ENCODE measurements at regions of chr21 and their contacts with region 1.

Region 1: GRCh38 chr21:34888569-34889319 is 160.4 kb downstream of the RUNX1 start:
- DNase-seq: peak; percentile 86 to 96
- H3K4me3 ChIP-seq: peak overlapping the region; percentile 77 to 85
- H3K27ac ChIP-seq: peak overlapping the region; percentile 86 to 94
- H3K4me1 ChIP-seq: peaks cover 4 to 24% of the 10 kb centered on the region in 2 donors
- H3K27me3 ChIP-seq: peaks cover 4% of the 10 kb centered on the region
- CTCF ChIP-seq: peak in 1 of 3 experiments; percentile 3

Region 2: GRCh38 chr21:34807146-34807880 is 81.4 kb before region 1 on chr21:
- intact Hi-C with region 1: loop called (anchors 5 kb)
- DNase-seq: peak in 1 of 2 donors; percentile 73
- H3K4me3 ChIP-seq: no peak overlapping the region
- H3K27ac ChIP-seq: peak overlapping the region; percentile 74 to 86
- H3K4me1 ChIP-seq: peaks cover 0 to 2% of the 10 kb centered on the region in 2 donors
- H3K27me3 ChIP-seq: no peaks in the 10 kb centered on the region
- CTCF ChIP-seq: no peak

Region 3: GRCh38 chr21:35256467-35256988 is 367.8 kb after region 1 on chr21:
- intact Hi-C with region 1: loop called (anchors 5 kb)
- DNase-seq: peak; percentile 33 to 89
- H3K4me3 ChIP-seq: peak overlapping the region; percentile 25 to 42
- H3K27ac ChIP-seq: peak overlapping the region in 1 of 2 donors; percentile 52
- H3K4me1 ChIP-seq: peaks cover 0 to 15% of the 10 kb centered on the region in 2 donors
- H3K27me3 ChIP-seq: no peaks in the 10 kb centered on the region
- CTCF ChIP-seq: no peak

Region 4: GRCh38 chr21:35616090-35616489 is 727.3 kb after region 1 on chr21:
- intact Hi-C with region 1: loop called (anchors 2 kb)
- DNase-seq: no peak
- H3K4me3 ChIP-seq: no peak overlapping the region
- H3K27ac ChIP-seq: no peak overlapping the region
- H3K4me1 ChIP-seq: no peaks in the 10 kb centered on the region
- H3K27me3 ChIP-seq: no peaks in the 10 kb centered on the region
- CTCF ChIP-seq: peak; percentile 30 to 53 (median 42)

Region 5: DNA sequence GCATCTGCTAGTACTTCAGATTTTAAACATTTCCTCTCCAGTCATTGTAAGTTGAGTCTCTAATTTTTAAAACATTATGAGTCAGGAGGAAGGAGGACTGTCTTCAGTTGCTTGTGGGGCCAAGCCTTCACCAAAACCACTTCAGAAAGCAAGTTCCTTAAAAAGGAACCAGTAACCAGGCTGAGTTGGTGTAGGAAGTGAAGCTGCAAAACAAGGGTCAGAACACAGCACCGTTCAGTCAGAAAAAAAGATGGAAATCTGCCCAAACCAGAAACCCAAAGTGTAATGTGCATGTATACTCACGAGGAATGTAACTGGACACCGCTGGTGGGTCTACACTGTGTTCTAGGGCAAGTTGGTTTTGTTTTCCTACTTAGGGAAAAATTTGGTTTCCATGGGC is 769.5 kb after region 1 on chr21:
- intact Hi-C with region 1: no loop called
- DNase-seq: no peak
- H3K4me3 ChIP-seq: no peak overlapping the region
- H3K27ac ChIP-seq: no peak overlapping the region
- H3K4me1 ChIP-seq: no peaks in the 10 kb centered on the region
- H3K27me3 ChIP-seq: no peaks in the 10 kb centered on the region
- CTCF ChIP-seq: no peak

Region 6: GRCh38 chr21:36028127-36029069 is 1139.7 kb after region 1 on chr21:
- intact Hi-C with region 1: loop called (anchors 10 kb)
- DNase-seq: peak; percentile 17 to 84
- H3K4me3 ChIP-seq: no peak overlapping the region
- H3K27ac ChIP-seq: no peak overlapping the region
- H3K4me1 ChIP-seq: no peaks in the 10 kb centered on the region
- H3K27me3 ChIP-seq: no peaks in the 10 kb centered on the region
- CTCF ChIP-seq: peak; percentile 76 to 94 (median 91)

Region 7: GRCh38 chr21:36684957-36685714 is 1796.4 kb after region 1 on chr21:
- intact Hi-C with region 1: no loop called
- DNase-seq: no peak
- H3K4me3 ChIP-seq: no peak overlapping the region
- H3K27ac ChIP-seq: no peak overlapping the region
- H3K4me1 ChIP-seq: no peaks in the 10 kb centered on the region
- H3K27me3 ChIP-seq: no peaks in the 10 kb centered on the region
- CTCF ChIP-seq: no peak